Activated B cell treated with CpG ODN at 0.5 μM for 24 hours (primary cell): ENCODE measurements at regions of chr2 and their contacts with region 1.

Region 1: GRCh38 chr2:174536304-174536703 is 49.5 kb upstream of the GPR155 start:
- DNase-seq: no peak
- ATAC-seq: no peak
- H3K4me3 Mint-ChIP-seq: no peak overlapping the region
- H3K27ac Mint-ChIP-seq: no peak overlapping the region
- H3K4me1 Mint-ChIP-seq: no peaks in the 10 kb centered on the region
- H3K27me3 Mint-ChIP-seq: peaks cover 7% of the 10 kb centered on the region
- CTCF ChIP-seq: no peak

Region 2: DNA sequence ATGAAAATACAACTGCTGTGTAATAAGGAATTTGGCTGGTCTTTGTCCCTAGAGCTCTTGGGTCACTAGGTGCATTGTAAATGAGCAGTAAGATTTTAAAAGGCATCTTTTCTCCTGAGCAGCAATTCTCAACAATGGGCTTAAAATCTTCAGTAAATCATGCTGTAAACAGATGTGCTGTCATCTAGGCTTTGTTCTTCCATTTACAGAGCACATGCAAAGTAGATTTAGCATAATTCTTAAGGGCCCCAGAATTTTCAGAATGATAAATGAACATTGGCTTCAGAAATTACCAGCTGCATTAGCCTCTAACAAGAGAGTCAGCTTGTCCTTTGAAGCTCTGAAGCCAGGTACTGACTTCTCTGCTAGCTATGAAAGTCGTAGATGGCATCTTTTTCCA is 167.6 kb before region 1 on chr2:
- CTCF ChIA-PET with region 1: no interaction called
- POLR2A ChIA-PET with region 1: no interaction called
- intact Hi-C with region 1: no loop called
- DNase-seq: no peak
- ATAC-seq: no peak
- H3K4me3 Mint-ChIP-seq: no peak overlapping the region
- H3K27ac Mint-ChIP-seq: no peak overlapping the region
- H3K4me1 Mint-ChIP-seq: no peaks in the 10 kb centered on the region
- H3K27me3 Mint-ChIP-seq: no peaks in the 10 kb centered on the region
- CTCF ChIP-seq: no peak

Region 3: DNA sequence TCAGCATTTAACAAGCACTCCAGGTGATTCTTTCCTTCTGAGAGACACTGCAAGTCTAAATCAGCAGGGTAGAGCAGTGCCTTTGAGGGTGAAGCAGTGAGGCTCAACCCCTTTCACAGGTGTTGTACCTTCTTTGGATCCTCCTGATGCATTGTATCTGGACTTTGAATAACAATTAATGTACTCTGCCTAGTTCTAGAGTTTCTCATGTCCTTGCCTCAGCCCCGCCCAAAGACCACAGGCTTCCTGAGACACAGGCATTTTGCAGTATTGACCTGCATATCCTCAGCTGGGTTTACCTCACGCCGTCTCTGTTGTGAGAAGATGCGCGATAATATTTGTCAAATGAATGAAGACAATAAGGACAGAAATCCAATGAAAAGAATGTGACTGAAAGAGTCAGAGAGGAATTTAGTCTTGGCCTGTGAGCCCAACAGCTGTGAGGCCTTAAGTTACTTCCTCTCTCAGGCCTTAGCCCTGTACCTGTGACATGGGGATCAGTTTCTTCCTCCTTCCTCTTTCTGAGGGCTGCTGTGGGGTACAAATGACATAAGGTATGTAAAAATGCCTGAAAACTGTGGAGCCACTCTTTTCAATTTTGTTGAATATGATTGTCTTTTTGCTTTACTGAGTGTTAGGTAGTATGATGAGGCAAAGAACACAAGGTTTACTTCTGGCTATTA is 17.6 kb after region 1 on chr2:
- CTCF ChIA-PET with region 1: no interaction called
- POLR2A ChIA-PET with region 1: no interaction called
- intact Hi-C with region 1: loop called (anchors 2 kb)
- DNase-seq: no peak
- ATAC-seq: peak; percentile 87
- H3K4me3 Mint-ChIP-seq: peak overlapping the region; percentile 40
- H3K27ac Mint-ChIP-seq: peak overlapping the region; percentile 88
- H3K4me1 Mint-ChIP-seq: peaks cover 33% of the 10 kb centered on the region
- H3K27me3 Mint-ChIP-seq: no peaks in the 10 kb centered on the region
- CTCF ChIP-seq: no peak

Region 4: DNA sequence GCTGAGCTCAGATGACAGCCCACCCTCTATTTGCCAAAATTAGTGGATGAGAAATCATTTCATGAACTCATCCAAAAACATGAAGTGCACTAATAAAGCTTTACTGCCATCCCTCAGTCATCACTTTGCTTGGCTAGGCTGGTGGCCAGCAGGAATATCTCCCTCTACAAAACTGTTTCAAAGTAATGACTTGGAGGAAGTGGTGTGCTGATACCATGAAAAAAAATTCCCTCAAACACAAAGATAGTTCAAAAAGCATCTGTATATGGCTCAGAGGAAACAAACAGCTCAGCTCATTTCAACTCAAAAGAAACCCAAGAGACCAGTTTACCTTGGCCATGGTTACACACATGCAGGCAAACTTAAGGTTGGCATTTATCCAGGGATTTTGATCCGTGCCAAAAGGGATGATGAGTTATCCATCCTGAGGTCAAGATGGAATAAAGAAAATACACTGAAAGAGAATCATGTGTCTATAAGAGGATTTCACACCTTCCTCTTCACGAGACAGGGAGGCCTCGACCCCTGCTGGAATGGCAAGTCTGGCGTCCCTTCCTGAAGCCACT is 79.7 kb after region 1 on chr2:
- CTCF ChIA-PET with region 1: no interaction called
- POLR2A ChIA-PET with region 1: no interaction called
- intact Hi-C with region 1: no loop called
- DNase-seq: no peak
- ATAC-seq: peak; percentile 18
- H3K4me3 Mint-ChIP-seq: peak overlapping the region; percentile 63
- H3K27ac Mint-ChIP-seq: peak overlapping the region; percentile 83
- H3K4me1 Mint-ChIP-seq: peaks cover 83% of the 10 kb centered on the region
- H3K27me3 Mint-ChIP-seq: no peaks in the 10 kb centered on the region
- CTCF ChIP-seq: no peak

Region 5: GRCh38 chr2:174699993-174700766 is 163.9 kb after region 1 on chr2:
- CTCF ChIA-PET with region 1: no interaction called
- POLR2A ChIA-PET with region 1: no interaction called
- intact Hi-C with region 1: no loop called
- DNase-seq: no peak
- ATAC-seq: peak; percentile 57
- H3K4me3 Mint-ChIP-seq: no peak overlapping the region
- H3K27ac Mint-ChIP-seq: no peak overlapping the region
- H3K4me1 Mint-ChIP-seq: peaks cover 2% of the 10 kb centered on the region
- H3K27me3 Mint-ChIP-seq: peaks cover 14% of the 10 kb centered on the region
- CTCF ChIP-seq: peak; percentile 59